ENCODE measurements at regions of chr12 and their contacts with region 1.

Region 1: GRCh38 chr12:115946867-115947696 is 330.4 kb downstream of the MED13L start:
- DNase-seq: no peak
- ATAC-seq: no peak
- H3K4me3 Mint-ChIP-seq: no peak overlapping the region
- H3K27ac Mint-ChIP-seq: no peak overlapping the region
- H3K4me1 Mint-ChIP-seq: peaks cover 12% of the 10 kb centered on the region
- H3K27me3 Mint-ChIP-seq: peaks cover 7% of the 10 kb centered on the region
- CTCF ChIP-seq: peak; percentile 59

Region 2: DNA sequence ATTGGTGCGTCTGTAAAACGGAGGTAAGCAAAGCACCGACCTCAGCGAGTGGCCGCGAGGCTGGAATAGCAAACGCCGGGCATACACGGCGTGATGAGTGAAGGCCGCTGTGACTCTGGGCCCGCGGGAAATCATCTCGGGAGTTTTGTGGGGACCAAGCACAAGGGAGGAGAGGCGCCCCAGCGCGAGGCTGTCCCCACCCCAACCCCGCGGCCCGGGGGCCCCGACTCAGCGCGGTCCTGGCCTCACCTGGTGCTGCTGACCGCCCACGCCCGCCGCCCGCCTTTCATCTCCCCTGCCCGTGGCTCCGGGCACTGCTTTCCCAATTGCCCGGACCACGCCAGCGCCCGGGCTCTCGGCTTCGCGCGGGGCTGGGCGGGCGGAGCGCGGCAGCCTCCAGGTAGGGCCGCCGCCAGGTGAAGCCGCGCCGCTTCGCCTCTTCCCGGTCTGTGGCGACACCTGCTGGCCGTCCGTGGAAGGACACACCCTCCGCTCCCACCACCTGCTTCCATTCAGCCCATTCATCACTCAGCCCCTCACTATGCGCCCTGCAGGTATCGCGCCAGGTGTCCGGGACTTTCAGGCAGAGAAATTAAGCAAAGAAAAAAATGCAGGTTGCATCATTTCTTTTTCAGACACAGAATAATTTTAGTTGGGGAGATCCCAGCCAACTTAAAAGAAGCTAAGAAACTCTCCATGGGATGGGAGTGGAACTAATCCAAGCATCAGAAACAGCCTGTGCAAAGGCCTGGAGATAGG is 30.0 kb before region 1 on chr12:
- CTCF ChIA-PET with region 1: interaction called, 12 read pairs
- POLR2A ChIA-PET with region 1: no interaction called
- DNase-seq: peak; percentile 93
- ATAC-seq: peak; percentile 95
- H3K4me3 Mint-ChIP-seq: peak overlapping the region; percentile 69
- H3K27ac Mint-ChIP-seq: no peak overlapping the region
- H3K4me1 Mint-ChIP-seq: 0 out of 2 replicates have a peak, but pooled peaks cover 8% of the 10 kb centered on the region
- H3K27me3 Mint-ChIP-seq: peaks cover 38% of the 10 kb centered on the region
- CTCF ChIP-seq: peak; percentile 96

Region 3: DNA sequence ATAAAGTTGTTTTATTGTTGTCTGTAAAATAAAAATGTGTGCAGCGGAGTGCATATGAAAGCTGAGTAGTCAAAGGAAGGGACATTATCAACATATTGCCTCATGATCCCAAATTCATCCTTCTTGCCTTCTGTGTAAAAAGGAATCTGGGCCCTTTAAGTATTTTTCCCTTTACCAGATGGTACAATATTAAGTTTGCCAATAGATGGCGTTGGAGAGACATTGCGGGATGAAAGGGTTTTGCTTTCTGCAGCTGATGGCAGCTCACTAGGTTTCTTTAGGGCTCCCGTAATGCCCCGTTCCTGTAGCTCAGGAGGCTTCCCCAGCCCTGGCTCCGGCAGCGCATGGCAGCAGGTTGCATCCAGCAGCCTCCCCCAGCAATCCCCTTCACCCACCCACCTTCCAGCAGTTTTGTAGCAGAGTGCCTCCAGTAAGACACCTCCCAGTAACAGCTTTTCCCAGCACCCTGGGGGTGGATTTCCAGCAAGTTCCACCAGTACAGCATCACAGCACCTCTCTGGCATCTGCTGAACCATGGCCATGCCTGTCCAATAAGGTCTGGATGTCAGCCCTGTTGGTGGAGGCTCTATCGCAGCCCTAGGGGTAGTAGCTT is 24.0 kb before region 1 on chr12:
- CTCF ChIA-PET with region 1: interaction called, 17 read pairs
- POLR2A ChIA-PET with region 1: no interaction called
- DNase-seq: no peak
- ATAC-seq: peak; percentile 64
- H3K4me3 Mint-ChIP-seq: no peak overlapping the region
- H3K27ac Mint-ChIP-seq: no peak overlapping the region
- H3K4me1 Mint-ChIP-seq: no peaks in the 10 kb centered on the region
- H3K27me3 Mint-ChIP-seq: peaks cover 14% of the 10 kb centered on the region
- CTCF ChIP-seq: no peak

Region 4: GRCh38 chr12:115983226-115983798 is 36.2 kb after region 1 on chr12:
- CTCF ChIA-PET with region 1: interaction called, 10 read pairs
- POLR2A ChIA-PET with region 1: no interaction called
- DNase-seq: peak; percentile 73
- ATAC-seq: peak; percentile 94
- H3K4me3 Mint-ChIP-seq: no peak overlapping the region
- H3K27ac Mint-ChIP-seq: no peak overlapping the region
- H3K4me1 Mint-ChIP-seq: peaks cover 32% of the 10 kb centered on the region
- H3K27me3 Mint-ChIP-seq: no peaks in the 10 kb centered on the region
- CTCF ChIP-seq: peak; percentile 53

Region 5: DNA sequence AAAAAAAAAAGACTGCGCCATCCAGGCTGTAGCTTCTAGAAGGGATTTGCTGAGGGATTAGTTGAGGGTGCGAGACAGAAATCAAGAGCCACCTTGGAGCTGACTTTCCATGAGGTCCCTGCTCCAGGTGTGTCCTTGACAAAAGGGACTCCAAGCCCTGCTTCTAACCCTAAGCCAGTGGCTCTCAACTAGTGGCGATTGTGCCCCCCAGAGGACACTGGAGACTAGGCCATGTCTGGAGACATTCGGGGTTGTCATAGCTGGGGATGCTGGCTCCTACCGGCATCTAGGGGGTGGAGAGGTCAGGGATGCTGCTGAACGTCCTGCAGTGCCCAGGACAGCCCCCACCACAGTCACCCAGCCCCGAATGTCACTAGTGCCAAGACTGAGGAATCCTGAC is 750.2 kb after region 1 on chr12:
- CTCF ChIA-PET with region 1: interaction called, 10 read pairs
- POLR2A ChIA-PET with region 1: no interaction called
- DNase-seq: peak; percentile 72
- ATAC-seq: peak; percentile 89
- H3K4me3 Mint-ChIP-seq: no peak overlapping the region
- H3K27ac Mint-ChIP-seq: no peak overlapping the region
- H3K4me1 Mint-ChIP-seq: peaks cover 18% of the 10 kb centered on the region
- H3K27me3 Mint-ChIP-seq: peaks cover 17% of the 10 kb centered on the region
- CTCF ChIP-seq: no peak